ENCODE measurements at regions of chr1 and their contacts with region 1.

Region 1: GRCh38 chr1:203290261-203291089 is 14.8 kb upstream of the BTG2 start:
- DNase-seq: peak; percentile 97 to 98
- ATAC-seq: peak; percentile 87 to 92 (median 91)
- H3K4me3 ChIP-seq: peak overlapping the region; percentile 52
- H3K27ac ChIP-seq: peak overlapping the region; percentile 91
- H3K4me1 ChIP-seq: peaks cover 53% of the 10 kb centered on the region
- H3K27me3 ChIP-seq: no peaks in the 10 kb centered on the region
- CTCF ChIP-seq: no peak

Region 2: GRCh38 chr1:203239526-203240305 is 50.8 kb before region 1 on chr1:
- intact Hi-C with region 1: no loop called
- DNase-seq: no peak
- ATAC-seq: no peak
- H3K4me3 ChIP-seq: no peak overlapping the region
- H3K27ac ChIP-seq: no peak overlapping the region
- H3K4me1 ChIP-seq: no peaks in the 10 kb centered on the region
- H3K27me3 ChIP-seq: no peaks in the 10 kb centered on the region
- CTCF ChIP-seq: no peak

Region 3: DNA sequence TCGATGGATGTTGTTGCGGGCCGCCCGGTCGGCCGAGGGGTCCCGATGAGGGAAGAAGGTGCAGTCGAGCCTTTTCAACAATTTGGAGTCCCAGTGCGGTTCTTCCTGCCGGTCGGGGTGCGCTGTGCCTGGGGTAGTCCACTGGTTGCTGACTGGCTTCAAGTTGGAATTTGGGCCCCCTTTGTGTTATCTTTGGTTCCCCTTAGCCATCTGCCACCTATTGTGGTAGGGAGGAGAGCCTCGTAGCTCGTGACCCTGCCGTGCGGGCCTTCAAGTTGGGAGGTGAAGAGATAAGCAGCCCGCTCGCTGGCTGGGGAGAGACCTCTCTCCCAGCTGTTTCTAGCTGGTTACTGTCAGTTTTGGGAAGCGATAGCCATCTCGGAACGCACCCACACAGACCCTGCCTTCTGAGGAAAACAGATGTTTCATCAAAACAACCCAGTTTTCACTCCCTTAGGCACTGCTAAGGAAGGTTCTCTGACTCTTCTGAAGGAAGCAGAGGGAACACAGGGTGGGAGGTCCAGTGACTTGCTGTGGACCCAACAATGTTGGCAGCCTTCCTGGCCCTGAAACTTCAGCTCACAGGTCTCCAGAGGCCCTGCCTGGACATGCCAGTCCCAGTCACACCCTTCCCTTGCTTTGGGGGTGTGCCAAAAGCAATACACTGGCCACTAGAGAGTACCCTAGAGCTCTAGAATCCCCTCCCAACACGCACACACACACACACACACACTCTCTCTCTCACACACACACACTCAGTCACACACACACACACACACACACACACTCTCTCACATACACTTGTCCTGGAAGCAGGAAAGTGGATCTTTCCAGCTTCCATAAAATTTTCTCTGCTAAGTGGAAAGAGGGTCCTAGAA is 15.9 kb after region 1 on chr1:
- intact Hi-C with region 1: loop called in 1 of 2 experiments (anchors 1 kb)
- DNase-seq: peak; percentile 85 to 94
- ATAC-seq: peak; percentile 49 to 68 (median 64)
- H3K4me3 ChIP-seq: peak overlapping the region; percentile 93
- H3K27ac ChIP-seq: peak overlapping the region; percentile 98
- H3K4me1 ChIP-seq: peaks cover 27% of the 10 kb centered on the region
- H3K27me3 ChIP-seq: no peaks in the 10 kb centered on the region
- CTCF ChIP-seq: no peak

Region 4: DNA sequence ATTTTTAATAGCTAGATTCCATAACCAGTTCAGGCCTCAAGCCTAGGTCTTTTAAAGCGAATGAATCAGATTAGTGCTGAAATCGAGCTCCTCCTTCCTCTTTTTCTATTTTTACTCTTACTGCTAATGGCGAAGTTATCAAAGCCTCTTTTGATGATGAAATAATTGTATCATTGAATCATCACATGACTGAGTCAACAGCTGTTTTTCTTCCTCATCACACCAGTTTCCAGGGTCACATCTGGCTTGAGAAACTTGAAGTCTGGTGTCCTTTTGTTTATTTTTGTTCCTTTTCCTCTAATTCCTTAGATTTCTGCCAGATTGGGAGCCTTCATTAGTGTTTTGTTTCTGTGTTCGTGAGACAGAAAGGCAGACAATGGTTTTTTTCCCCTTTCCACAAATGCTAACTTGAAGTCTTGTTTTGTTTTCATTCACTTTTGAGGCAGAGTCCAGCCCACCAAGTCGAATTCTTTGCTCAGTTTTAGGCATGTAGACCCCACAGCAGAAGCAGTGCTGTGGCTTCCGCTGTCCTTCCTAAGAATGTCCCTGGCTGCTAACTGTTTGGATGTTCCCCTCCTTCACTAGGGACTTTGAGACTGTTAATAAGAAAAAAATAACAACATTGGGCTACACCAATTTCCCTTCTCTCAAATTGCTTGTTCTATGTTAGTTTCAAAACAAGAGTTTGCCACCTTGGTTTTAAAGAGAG is 112.3 kb after region 1 on chr1:
- intact Hi-C with region 1: no loop called
- DNase-seq: no peak
- ATAC-seq: peak; percentile 65 to 86 (median 75)
- H3K4me3 ChIP-seq: no peak overlapping the region
- H3K27ac ChIP-seq: peak overlapping the region; percentile 62
- H3K4me1 ChIP-seq: peaks cover 7% of the 10 kb centered on the region
- H3K27me3 ChIP-seq: peaks cover 0 to 16% (median 0%) of the 10 kb centered on the region in 3 donors
- CTCF ChIP-seq: no peak